HCT116 (cell line): ENCODE measurements at regions of chr7 and their contacts with region 1.

Region 1: GRCh38 chr7:130242198-130243014 is 24.3 kb upstream of the CPA2 start:
- DNase-seq: peak; percentile 24
- ATAC-seq: peak; percentile 100
- H3K4me3 ChIP-seq: no peak overlapping the region
- H3K27ac ChIP-seq: no peak overlapping the region
- H3K4me1 ChIP-seq: no peaks in the 10 kb centered on the region
- H3K27me3 ChIP-seq: no peaks in the 10 kb centered on the region
- CTCF ChIP-seq: peak; percentile 84 to 95 (median 94)
- POLR2A ChIP-seq: no peak
- RAD21 ChIP-seq: peak; percentile 93

Region 2: GRCh38 chr7:129952653-129953560 is 289.5 kb before region 1 on chr7 and contains the start of gene UBE2H:
- CTCF ChIA-PET with region 1: no interaction called
- POLR2A ChIA-PET with region 1: no interaction called
- RAD21 ChIA-PET with region 1: no interaction called
- intact Hi-C with region 1: loop called (anchors 5 kb)
- DNase-seq: peak; percentile 83
- ATAC-seq: peak; percentile 72
- H3K4me3 ChIP-seq: peak within 1 kb of the TSS; percentile 77 to 87
- H3K27ac ChIP-seq: peak within 1 kb of the TSS; percentile 81
- H3K4me1 ChIP-seq: peaks cover 35 to 55% of the 10 kb centered on the region in 2 experiments
- H3K27me3 ChIP-seq: no peaks in the 10 kb centered on the region
- CTCF ChIP-seq: no peak
- POLR2A ChIP-seq: peak; percentile 52
- RAD21 ChIP-seq: no peak
- total RNA-seq, gene UBE2H: 117 TPM

Region 3: DNA sequence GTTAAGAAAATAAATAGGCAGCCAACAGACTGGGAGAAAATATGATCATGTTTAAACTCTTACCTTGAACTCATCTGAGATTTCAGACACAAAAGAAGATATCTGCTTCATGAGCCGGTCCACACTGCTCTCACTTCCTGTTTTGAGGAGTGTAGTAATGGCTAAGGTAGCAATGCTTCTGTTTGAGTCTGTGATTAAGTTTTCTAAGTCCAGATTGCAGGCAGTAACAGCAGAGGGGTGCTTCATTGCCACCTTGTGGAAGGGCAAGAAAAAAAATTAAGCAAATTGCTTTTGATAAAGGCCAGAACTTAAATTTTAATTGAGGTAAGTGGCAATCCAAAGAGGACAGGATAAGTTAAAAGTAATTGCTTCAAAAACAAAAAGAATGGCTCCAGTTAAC is 318.6 kb after region 1 on chr7:
- CTCF ChIA-PET with region 1: interaction called, 3 read pairs
- POLR2A ChIA-PET with region 1: no interaction called
- RAD21 ChIA-PET with region 1: no interaction called
- intact Hi-C with region 1: loop called (anchors 1 kb)
- DNase-seq: peak; percentile 26
- ATAC-seq: peak; percentile 83
- H3K4me3 ChIP-seq: no peak overlapping the region
- H3K27ac ChIP-seq: no peak overlapping the region
- H3K4me1 ChIP-seq: no peaks in the 10 kb centered on the region
- H3K27me3 ChIP-seq: no peaks in the 10 kb centered on the region
- CTCF ChIP-seq: peak; percentile 41 to 68 (median 54); a peak in 4 of 6 replicates
- POLR2A ChIP-seq: no peak
- RAD21 ChIP-seq: peak; percentile 87

Region 4: DNA sequence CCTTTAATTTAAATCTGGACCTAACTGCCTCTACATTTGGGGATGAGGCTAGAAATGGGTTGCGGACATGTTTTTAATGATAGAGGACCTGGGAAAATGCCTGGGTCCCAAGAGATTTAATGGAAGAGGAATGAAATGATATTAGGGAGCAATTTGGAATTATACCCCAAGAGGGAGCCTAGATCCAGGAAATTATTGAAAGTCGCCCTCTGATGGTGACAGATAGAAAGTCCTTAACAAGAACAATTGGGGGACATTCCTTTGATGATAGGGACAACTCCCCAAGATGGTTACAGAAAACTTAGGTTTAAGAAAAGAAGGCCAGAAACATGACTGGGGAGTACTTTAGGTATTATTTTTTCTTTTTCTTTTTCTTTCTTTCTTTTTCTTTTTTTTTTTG is 453.4 kb after region 1 on chr7:
- CTCF ChIA-PET with region 1: interaction called, 3 read pairs
- POLR2A ChIA-PET with region 1: no interaction called
- RAD21 ChIA-PET with region 1: no interaction called
- intact Hi-C with region 1: loop called (anchors 10 kb)
- DNase-seq: peak; percentile 46
- ATAC-seq: peak; percentile 70
- H3K4me3 ChIP-seq: no peak overlapping the region
- H3K27ac ChIP-seq: no peak overlapping the region
- H3K4me1 ChIP-seq: no peaks in the 10 kb centered on the region
- H3K27me3 ChIP-seq: no peaks in the 10 kb centered on the region
- CTCF ChIP-seq: peak; percentile 70 to 98 (median 78)
- POLR2A ChIP-seq: no peak
- RAD21 ChIP-seq: peak; percentile 77

Region 5: GRCh38 chr7:130721486-130722280 is 479.3 kb after region 1 on chr7:
- CTCF ChIA-PET with region 1: interaction called, 3 read pairs
- POLR2A ChIA-PET with region 1: no interaction called
- RAD21 ChIA-PET with region 1: no interaction called
- intact Hi-C with region 1: loop called (anchors 1 kb)
- DNase-seq: peak; percentile 70
- ATAC-seq: peak; percentile 100
- H3K4me3 ChIP-seq: no peak overlapping the region
- H3K27ac ChIP-seq: no peak overlapping the region
- H3K4me1 ChIP-seq: no peaks in the 10 kb centered on the region
- H3K27me3 ChIP-seq: no peaks in the 10 kb centered on the region
- CTCF ChIP-seq: peak; percentile 68 to 81 (median 70)
- POLR2A ChIP-seq: no peak
- RAD21 ChIP-seq: peak; percentile 95

Region 6: DNA sequence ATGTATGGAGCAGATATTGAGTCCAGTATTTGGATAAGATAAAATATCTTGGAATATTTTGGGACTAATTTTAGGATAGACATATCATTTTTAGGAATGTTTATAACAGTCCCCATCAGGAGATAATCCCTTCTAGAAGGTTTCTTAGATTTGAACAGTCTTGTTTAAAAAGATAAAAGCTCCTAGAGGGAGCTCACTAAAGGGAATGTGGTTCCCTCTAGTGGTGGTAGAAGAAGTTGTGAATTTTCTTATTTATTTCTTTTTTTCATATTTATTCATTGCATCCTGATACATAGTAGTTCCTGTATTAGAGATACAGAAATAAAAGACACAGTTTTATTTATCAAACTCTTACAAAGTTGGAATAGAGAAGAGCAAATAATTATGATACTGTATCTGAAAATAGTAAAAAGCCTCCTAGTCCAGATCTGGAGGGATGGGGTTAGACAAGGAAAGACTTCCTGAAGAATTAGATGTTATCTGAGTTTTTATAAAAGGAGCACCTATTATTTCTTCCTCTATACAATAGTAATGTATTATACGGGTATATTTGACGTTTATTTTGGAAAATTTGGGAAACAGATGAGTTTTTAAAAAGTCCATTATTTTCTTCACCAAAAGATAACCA is 516.1 kb after region 1 on chr7:
- CTCF ChIA-PET with region 1: interaction called, 11 read pairs
- POLR2A ChIA-PET with region 1: no interaction called
- RAD21 ChIA-PET with region 1: no interaction called
- intact Hi-C with region 1: loop called (anchors 1 kb)
- DNase-seq: peak; percentile 37
- ATAC-seq: peak; percentile 74
- H3K4me3 ChIP-seq: no peak overlapping the region
- H3K27ac ChIP-seq: no peak overlapping the region
- H3K4me1 ChIP-seq: no peaks in the 10 kb centered on the region
- H3K27me3 ChIP-seq: no peaks in the 10 kb centered on the region
- CTCF ChIP-seq: peak; percentile 55 to 81 (median 77)
- POLR2A ChIP-seq: no peak
- RAD21 ChIP-seq: peak; percentile 80

Region 7: GRCh38 chr7:130831817-130832481 is 589.5 kb after region 1 on chr7:
- CTCF ChIA-PET with region 1: no interaction called
- POLR2A ChIA-PET with region 1: no interaction called
- RAD21 ChIA-PET with region 1: no interaction called
- intact Hi-C with region 1: loop called (anchors 5 kb)
- DNase-seq: peak; percentile 41
- ATAC-seq: 0 out of 2 replicates have a peak, but pooled peaks have one; percentile 47
- H3K4me3 ChIP-seq: no peak overlapping the region
- H3K27ac ChIP-seq: peak overlapping the region; percentile 2; the same call in 1 of the 2 replicates
- H3K4me1 ChIP-seq: peaks cover 0 to 19% of the 10 kb centered on the region in 2 experiments; a peak in 2 of 4 replicates
- H3K27me3 ChIP-seq: no peaks in the 10 kb centered on the region
- CTCF ChIP-seq: peak; percentile 60 to 84 (median 66); a peak in 5 of 6 replicates
- POLR2A ChIP-seq: no peak
- RAD21 ChIP-seq: peak; percentile 87